PC-9 (cell line): ENCODE measurements at regions of chr6 and their contacts with region 1.

Region 1: GRCh38 chr6:32933636-32934085 is 7.2 kb downstream of the HLA-DMB start:
- DNase-seq: peak; percentile 44 to 54
- H3K4me3 ChIP-seq: no peak overlapping the region
- H3K27ac ChIP-seq: no peak overlapping the region
- H3K4me1 ChIP-seq: no peaks in the 10 kb centered on the region
- H3K27me3 ChIP-seq: peaks cover 49% of the 10 kb centered on the region
- CTCF ChIP-seq: peak; percentile 89

Region 2: DNA sequence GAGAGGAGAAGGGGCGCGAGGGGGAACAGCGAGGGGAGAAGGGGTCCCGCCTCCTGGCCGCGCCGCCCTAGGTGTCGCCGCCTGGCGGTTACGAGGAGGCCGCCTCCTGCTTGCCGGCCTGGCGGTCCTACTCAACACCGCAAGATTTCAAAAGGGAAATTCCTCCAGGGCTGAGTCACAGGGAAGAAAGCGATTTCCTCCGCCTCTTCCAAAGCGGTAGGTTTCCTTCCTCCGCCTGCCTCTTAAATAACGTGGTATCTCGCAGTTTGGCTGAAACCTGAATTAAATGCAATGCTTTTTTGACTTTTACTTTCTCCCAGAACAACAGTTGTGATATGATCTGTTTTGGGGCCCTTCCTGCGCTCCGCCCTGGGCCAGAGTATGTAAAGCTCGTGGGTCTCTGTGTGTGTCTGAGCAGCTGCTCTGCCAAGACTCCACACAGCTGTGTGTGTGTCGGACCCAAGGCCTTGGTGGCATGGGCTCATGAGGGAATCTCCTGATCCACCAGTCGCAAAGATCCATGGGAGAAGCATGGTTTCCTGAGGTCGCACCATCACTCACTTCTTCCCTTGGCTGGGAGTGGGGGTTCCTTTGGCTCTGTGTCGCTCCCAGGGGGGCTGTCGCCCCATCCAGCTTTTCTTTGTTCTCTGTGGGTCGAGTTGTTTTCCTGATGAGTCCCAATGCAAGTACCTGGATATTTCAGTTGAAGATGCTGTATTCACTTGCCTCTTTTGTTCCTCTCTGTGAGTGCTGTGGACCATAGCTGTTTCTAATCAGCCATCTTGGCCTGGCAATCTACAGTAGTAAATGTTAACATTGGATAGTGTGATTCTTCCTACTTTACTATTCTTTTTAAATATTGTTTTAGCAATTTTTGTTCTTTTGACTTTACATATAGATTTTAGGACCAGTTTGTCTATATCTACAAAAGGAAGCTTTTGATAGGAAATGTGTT is 678.2 kb before region 1 on chr6:
- CTCF ChIA-PET with region 1: no interaction called
- POLR2A ChIA-PET with region 1: interaction called, 15 read pairs
- intact Hi-C with region 1: no loop called
- DNase-seq: peak; percentile 73 to 76
- H3K4me3 ChIP-seq: no peak overlapping the region
- H3K27ac ChIP-seq: no peak overlapping the region
- H3K4me1 ChIP-seq: peaks cover 5% of the 10 kb centered on the region; the same call in 1 of the 2 replicates
- H3K27me3 ChIP-seq: peaks cover 33% of the 10 kb centered on the region
- CTCF ChIP-seq: peak; percentile 55

Region 3: DNA sequence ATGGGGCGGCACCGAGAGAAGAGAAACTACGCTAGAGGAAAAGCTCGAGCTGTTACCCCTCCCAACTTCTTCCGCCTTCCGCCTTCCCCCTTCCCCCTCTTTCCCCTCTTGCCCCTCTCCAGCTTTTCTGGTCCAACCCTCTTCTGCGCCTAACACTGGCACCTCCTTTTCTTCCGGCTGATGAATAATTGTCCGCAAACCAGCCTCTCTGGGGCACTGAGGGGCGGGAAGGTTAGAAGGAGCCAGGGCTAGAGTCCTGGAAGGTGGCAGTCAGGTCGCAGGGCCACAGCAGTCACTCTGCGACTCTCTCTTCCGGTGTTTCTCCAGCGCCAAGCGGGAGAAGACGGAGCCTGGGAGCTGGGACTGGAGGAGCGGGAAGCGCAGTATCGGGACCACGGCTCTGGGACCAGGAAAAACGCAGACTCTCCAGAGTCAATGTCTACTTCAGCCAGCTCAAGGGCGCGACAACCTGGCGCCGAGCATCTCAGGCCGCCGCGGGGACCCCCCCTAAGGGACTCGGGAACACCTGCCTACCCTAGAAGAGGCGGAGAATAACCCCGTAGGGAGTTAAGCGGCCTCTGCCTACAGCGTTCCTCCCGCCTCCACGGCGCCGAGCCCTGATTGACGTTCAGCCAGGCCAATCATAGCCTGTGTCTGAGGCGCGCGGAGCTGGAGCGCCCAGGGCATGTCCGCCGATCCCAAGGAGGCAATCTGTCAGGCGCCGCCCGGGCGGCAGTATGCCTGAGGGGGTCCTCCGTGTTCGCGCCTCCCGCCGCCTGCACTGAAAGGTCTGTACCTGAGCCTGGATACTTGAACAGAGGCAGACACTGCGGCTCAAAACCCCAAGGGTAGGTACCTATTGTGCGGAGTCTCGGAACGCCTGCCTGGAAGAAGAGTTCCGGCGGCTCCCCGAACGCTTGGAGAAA is 39.3 kb before region 1 on chr6:
- CTCF ChIA-PET with region 1: interaction called, 10 read pairs
- POLR2A ChIA-PET with region 1: no interaction called
- intact Hi-C with region 1: no loop called
- DNase-seq: peak; percentile 83 to 97
- H3K4me3 ChIP-seq: peak overlapping the region; percentile 86
- H3K27ac ChIP-seq: peak overlapping the region; percentile 63
- H3K4me1 ChIP-seq: peaks cover 12% of the 10 kb centered on the region
- H3K27me3 ChIP-seq: no peaks in the 10 kb centered on the region
- CTCF ChIP-seq: no peak

Region 4: GRCh38 chr6:32952817-32953739 is 19.4 kb after region 1 on chr6 and contains the start of gene HLA-DMA:
- CTCF ChIA-PET with region 1: interaction called, 11 read pairs
- POLR2A ChIA-PET with region 1: interaction called, 4 read pairs
- intact Hi-C with region 1: no loop called
- DNase-seq: peak; percentile 88 to 94
- H3K4me3 ChIP-seq: no peak within 1 kb of the TSS
- H3K27ac ChIP-seq: no peak within 1 kb of the TSS
- H3K4me1 ChIP-seq: peaks cover 4% of the 10 kb centered on the region
- H3K27me3 ChIP-seq: no peaks in the 10 kb centered on the region
- CTCF ChIP-seq: peak; percentile 81
- total RNA-seq, gene HLA-DMA: 18.3 and 22.1 TPM in 2 replicates

Region 5: GRCh38 chr6:32984605-32985389 is 51.1 kb after region 1 on chr6:
- CTCF ChIA-PET with region 1: interaction called, 31 read pairs
- POLR2A ChIA-PET with region 1: interaction called, 5 read pairs
- intact Hi-C with region 1: loop called (anchors 1 kb)
- DNase-seq: peak; percentile 85
- H3K4me3 ChIP-seq: no peak overlapping the region
- H3K27ac ChIP-seq: no peak overlapping the region
- H3K4me1 ChIP-seq: 0 out of 2 replicates have a peak, but pooled peaks cover 4% of the 10 kb centered on the region
- H3K27me3 ChIP-seq: 0 out of 2 replicates have a peak, but pooled peaks cover 18% of the 10 kb centered on the region
- CTCF ChIP-seq: peak; percentile 89

Region 6: DNA sequence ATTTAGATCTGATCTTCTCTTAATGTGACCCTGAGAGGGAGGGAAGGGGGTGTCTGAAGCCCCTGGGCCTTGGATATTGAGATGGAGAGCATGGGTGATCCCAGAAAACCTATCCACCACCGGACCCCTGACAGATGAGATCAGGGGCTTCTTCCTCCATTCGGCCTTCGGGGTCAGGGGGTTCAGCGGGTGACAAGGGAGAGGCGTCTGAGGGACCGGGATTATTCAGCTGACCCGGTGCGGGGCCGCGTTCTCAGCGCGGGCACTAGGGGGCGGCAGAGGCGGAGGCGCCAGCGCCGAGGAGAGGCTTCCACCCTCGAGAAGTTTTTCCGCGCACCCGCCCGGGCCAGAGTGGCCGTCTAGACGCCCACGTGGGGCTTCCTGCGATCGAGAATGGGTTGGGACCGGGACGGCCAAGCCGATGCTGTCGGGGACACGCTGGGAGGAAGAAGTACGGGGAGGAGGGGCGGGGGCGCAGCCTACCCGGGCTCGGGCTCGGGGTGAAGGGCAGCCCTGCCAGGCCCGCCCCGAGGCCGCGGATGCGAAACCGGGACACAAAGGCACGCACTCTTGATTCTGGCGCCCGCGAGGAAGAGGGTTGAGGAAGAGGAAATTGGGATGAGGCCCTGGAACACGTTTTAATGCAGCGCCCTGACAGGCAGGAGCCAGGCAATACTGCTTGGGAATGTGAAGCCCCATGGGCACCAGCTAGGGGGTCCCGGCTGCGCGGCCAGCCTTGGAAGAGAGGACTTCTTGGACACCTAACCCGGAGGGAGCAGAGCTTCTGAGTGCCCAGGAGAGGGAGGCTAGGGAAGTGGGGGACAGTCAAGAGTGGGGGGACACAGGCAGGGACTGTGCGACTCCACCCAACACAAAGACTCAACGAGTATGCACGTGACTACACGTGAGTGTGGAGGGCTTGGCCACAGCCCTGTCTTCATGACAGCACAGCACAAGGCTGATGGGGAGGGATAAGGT is 228.0 kb after region 1 on chr6:
- CTCF ChIA-PET with region 1: interaction called, 10 read pairs
- POLR2A ChIA-PET with region 1: no interaction called
- intact Hi-C with region 1: no loop called
- DNase-seq: peak in 1 of 2 experiments; percentile 74
- H3K4me3 ChIP-seq: peak overlapping the region; percentile 60; the same call in 1 of the 2 replicates
- H3K27ac ChIP-seq: no peak overlapping the region
- H3K4me1 ChIP-seq: peaks cover 4% of the 10 kb centered on the region
- H3K27me3 ChIP-seq: peaks cover 40% of the 10 kb centered on the region
- CTCF ChIP-seq: peak; percentile 90